Endothelial cell of umbilical vein (primary cell): ENCODE measurements at regions of chr17 and their contacts with region 1.

Region 1: DNA sequence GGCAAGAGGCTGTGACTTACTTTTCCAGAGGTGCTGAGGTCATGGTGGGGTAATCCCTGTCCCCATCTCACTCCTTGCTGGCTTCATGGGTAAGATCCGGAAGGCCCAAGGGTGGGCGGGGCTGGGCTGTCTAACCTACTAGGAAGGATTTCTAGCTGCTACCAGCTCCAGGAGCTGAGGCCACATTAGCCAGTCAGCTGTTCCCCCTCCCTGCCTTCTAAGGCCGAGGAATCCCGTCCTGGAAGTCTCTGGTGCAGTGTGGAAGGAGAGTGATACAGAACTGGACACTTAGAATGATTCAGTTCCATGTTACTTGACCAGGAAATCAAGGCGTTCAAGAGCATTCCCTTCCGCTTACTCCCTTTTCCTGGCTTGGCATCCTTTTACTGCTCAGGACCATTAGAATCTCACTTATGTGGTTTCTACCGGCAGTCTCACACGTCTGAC is 8.9 kb downstream of the GNGT2 start:
- DNase-seq: peak; percentile 69
- H3K4me3 ChIP-seq: no peak overlapping the region
- H3K27ac ChIP-seq: peak overlapping the region; percentile 58
- H3K4me1 ChIP-seq: peaks cover 20% of the 10 kb centered on the region
- H3K27me3 ChIP-seq: no peaks in the 10 kb centered on the region
- CTCF ChIP-seq: no peak
- POLR2A ChIP-seq: peak; percentile 59

Region 2: DNA sequence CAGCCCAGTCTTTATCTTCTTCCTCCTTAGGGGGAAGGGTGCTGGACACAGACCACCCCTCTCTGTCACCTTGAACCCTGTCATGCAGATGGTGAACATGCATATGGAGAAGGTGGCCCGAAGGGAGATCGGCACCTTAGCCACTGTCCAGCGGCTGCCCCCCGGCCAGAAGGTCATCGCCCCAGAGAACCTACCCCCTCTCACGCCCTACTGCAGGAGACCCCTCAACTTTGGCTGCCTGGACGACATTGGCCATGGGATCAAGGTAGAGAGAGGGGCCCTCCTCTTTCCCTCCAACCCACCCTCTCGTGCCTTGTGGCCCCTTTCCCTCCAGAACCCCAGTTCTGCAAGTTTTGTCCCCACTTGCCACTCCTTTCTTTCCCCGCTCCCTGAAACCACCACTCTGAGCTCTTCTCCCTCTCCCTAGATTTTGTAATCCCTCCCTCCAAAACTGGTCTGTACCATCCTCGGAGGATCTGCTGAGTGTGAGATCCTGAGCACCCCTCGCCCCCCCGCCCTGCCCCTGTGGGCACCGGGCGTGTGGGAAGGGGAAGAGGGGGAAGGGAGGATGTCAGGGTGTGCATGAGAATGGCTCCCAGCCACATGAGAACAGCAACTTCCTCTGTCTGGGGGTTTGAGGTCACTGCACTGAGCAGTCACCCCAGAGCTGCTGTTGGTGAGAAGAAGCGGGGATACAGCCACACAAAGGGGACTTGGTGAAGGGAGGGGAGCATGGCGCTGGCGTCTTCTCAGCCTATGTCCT is 16.3 kb after region 1 on chr17:
- CTCF ChIA-PET with region 1: interaction called, 11 read pairs
- POLR2A ChIA-PET with region 1: no interaction called
- dilution Hi-C with region 1: no loop called
- intact Hi-C with region 1: no loop called
- DNase-seq: no peak
- H3K4me3 ChIP-seq: no peak overlapping the region
- H3K27ac ChIP-seq: no peak overlapping the region
- H3K4me1 ChIP-seq: peaks cover 32% of the 10 kb centered on the region
- H3K27me3 ChIP-seq: no peaks in the 10 kb centered on the region
- CTCF ChIP-seq: no peak
- POLR2A ChIP-seq: no peak

Region 3: DNA sequence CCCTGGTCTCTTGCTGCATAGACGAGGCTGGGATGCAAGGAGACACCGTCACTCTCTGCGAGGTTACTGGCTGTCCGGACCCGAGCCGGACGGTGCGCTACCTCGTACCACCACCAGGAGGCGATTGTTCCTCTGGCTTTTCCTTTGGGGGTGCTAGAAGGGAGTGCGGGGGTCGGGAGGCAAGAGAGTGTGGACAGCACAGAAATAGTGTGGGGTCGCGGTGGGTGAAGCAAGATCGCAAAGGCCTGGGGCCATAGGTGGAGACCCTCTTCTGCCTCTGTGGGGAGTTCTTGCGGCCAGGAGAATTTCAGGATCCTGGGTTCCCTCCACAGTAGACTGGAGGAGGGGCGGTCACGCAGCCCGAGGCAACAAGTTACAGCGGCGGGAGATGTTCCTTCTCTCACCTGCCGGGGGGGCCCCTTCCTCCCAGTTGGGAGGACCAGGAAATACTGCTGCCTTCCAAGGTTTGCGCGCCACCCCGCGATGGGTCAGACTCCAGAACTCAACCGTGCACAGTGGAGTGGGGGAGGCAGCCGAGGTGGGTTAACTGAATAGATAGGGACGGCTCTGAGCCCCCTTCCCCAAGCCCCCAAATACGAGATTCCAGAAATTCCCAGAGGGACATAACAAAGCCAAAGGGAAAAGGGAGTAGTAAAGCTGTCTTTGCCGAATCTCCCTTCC is 22.2 kb after region 1 on chr17:
- CTCF ChIA-PET with region 1: interaction called, 212 read pairs
- POLR2A ChIA-PET with region 1: no interaction called
- dilution Hi-C with region 1: no loop called
- intact Hi-C with region 1: no loop called
- DNase-seq: no peak
- H3K4me3 ChIP-seq: no peak overlapping the region
- H3K27ac ChIP-seq: no peak overlapping the region
- H3K4me1 ChIP-seq: peaks cover 11% of the 10 kb centered on the region
- H3K27me3 ChIP-seq: peaks cover 16 to 22% of the 10 kb centered on the region in 2 experiments
- CTCF ChIP-seq: peak; percentile 78 to 83
- POLR2A ChIP-seq: no peak